ENCODE measurements at regions of chrX and their contacts with region 1.

Region 1: GRCh38 chrX:65595460-65595876 is 60.9 kb upstream of the LAS1L start:
- DNase-seq: peak; percentile 71
- ATAC-seq: peak; percentile 91
- H3K4me3 Mint-ChIP-seq: peak overlapping the region; percentile 76
- H3K27ac Mint-ChIP-seq: peak overlapping the region; percentile 94
- H3K4me1 Mint-ChIP-seq: peaks cover 44% of the 10 kb centered on the region
- H3K27me3 Mint-ChIP-seq: no peaks in the 10 kb centered on the region
- CTCF ChIP-seq: no peak

Region 2: DNA sequence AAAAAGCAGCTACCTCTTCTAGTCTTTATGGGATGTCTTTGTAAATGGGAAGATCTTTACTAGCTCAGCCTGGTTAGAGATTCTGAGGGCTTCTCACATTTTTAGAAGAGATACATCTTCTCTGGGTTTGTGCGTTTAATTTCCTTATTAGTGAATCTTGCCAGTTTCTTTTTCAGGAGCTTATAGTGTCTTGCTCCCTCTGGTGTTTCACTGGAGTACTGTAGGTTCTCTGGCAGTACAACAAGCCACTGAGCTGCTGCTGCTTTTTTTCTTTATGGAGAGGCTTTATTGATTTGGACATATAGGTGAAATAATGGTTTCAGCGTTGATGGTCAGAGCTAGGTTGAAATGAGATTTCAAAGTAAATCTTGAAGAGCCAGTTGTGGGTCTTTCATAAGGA is 143.8 kb before region 1 on chrX:
- CTCF ChIA-PET with region 1: no interaction called
- POLR2A ChIA-PET with region 1: no interaction called
- intact Hi-C with region 1: no loop called
- DNase-seq: no peak
- ATAC-seq: no peak
- H3K4me3 Mint-ChIP-seq: no peak overlapping the region
- H3K27ac Mint-ChIP-seq: no peak overlapping the region
- H3K4me1 Mint-ChIP-seq: peaks cover 3% of the 10 kb centered on the region
- H3K27me3 Mint-ChIP-seq: no peaks in the 10 kb centered on the region
- CTCF ChIP-seq: no peak

Region 3: DNA sequence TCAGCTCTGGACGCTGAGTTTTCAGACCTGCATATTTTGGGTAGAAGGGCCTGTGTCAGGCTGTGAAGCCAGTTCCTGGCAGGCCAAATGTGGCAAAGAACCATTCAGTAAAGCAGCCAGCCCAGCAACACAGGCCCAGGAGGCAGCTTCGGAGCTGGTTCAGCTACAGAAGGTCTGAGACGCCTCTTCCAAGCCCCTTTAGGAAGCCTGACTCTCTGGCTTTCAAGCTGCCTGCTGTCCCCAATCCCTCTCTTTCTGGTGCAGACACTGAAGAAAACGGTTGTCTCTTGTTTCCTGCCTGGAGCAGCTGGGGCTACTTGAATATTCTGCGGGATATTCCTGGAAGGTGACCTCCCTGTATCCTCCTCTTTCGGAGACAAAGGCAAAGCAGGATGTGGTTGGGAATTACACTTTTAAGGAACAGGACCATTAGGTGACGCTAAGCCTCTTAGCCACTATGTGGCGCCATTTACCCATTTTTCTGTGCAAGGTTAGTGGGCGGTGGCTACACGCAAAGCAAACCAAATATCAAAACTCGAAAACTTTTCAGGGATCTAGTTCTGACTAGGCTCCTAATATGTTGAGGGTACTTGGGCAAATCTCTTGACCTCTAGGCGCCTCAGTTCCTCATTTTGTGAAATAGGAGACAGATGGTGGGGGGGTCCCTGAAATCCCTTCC is 13.7 kb before region 1 on chrX:
- CTCF ChIA-PET with region 1: no interaction called
- POLR2A ChIA-PET with region 1: no interaction called
- intact Hi-C with region 1: no loop called
- DNase-seq: no peak
- ATAC-seq: peak; percentile 67
- H3K4me3 Mint-ChIP-seq: no peak overlapping the region
- H3K27ac Mint-ChIP-seq: no peak overlapping the region
- H3K4me1 Mint-ChIP-seq: peaks cover 12% of the 10 kb centered on the region
- H3K27me3 Mint-ChIP-seq: no peaks in the 10 kb centered on the region
- CTCF ChIP-seq: no peak

Region 4: DNA sequence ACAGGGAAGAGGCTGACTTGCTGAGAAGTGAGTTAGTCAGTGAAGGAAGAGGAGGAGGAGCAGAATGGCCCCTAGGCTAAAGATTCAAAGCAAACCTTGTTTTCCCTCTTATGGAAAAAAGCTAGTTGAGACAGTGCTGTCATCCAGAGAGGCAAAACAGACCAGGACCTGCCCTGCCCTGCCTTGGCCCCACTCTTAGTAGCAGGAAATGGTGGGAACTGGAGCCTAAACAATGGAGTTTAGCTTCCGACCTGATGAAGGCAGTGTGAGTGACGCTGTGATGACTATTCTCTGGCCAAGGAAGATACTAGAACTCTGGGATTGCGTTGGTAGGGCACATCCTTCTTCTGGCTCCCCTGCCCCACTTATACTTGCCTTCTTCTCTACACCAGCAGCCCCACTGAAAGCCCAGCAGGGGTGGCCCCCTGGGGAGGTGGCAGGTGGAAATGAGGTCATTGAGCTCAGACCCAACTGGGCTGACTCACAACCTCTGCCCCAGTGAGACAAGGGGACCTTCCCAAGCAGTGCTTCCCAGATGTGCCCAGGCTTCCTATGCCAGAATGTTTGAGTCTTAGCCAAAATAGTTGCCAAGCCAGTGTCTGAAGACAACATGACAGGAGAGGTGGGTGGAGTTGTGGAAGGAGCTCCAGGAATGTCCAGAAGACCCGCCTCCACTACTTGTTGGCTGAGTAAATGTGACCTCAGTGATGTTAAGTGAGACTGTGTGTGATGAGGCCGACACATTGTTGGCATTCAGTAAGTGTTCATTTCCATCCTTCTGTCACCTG is 110.8 kb after region 1 on chrX:
- CTCF ChIA-PET with region 1: no interaction called
- POLR2A ChIA-PET with region 1: interaction called, 3 read pairs
- intact Hi-C with region 1: loop called (anchors 1 kb)
- DNase-seq: peak; percentile 34
- ATAC-seq: peak; percentile 92
- H3K4me3 Mint-ChIP-seq: peak overlapping the region; percentile 50
- H3K27ac Mint-ChIP-seq: peak overlapping the region; percentile 89
- H3K4me1 Mint-ChIP-seq: peaks cover 69% of the 10 kb centered on the region
- H3K27me3 Mint-ChIP-seq: no peaks in the 10 kb centered on the region
- CTCF ChIP-seq: no peak

Region 5: DNA sequence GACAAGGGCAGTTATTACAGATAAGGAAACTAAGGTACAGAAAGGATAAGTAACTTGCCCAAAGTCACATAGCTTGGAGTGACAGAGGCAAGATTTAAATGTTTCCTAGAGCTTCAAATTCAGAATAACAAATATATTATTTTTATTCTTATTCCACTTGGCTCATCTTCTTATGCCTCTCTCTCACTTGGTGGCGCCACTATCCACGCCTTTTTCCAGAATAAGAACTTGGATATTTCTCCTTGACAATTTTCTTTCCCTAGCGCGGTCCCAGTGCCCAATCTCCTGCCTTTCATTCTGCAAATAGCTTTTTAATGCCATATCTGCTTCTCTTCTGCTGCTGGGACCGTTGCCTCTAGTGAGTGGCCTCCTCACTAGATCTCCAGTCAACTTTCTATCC is 150.5 kb after region 1 on chrX:
- CTCF ChIA-PET with region 1: no interaction called
- POLR2A ChIA-PET with region 1: interaction called, 4 read pairs
- intact Hi-C with region 1: loop called (anchors 2 kb)
- DNase-seq: no peak
- ATAC-seq: no peak
- H3K4me3 Mint-ChIP-seq: no peak overlapping the region
- H3K27ac Mint-ChIP-seq: peak overlapping the region; percentile 0
- H3K4me1 Mint-ChIP-seq: peaks cover 40% of the 10 kb centered on the region
- H3K27me3 Mint-ChIP-seq: no peaks in the 10 kb centered on the region
- CTCF ChIP-seq: no peak

Region 6: GRCh38 chrX:65894133-65894532 is 298.7 kb after region 1 on chrX:
- CTCF ChIA-PET with region 1: no interaction called
- POLR2A ChIA-PET with region 1: no interaction called
- intact Hi-C with region 1: loop called (anchors 1 kb)
- DNase-seq: no peak
- ATAC-seq: peak; percentile 76
- H3K4me3 Mint-ChIP-seq: peak overlapping the region; percentile 41
- H3K27ac Mint-ChIP-seq: no peak overlapping the region
- H3K4me1 Mint-ChIP-seq: peaks cover 38% of the 10 kb centered on the region
- H3K27me3 Mint-ChIP-seq: no peaks in the 10 kb centered on the region
- CTCF ChIP-seq: no peak

Region 7: GRCh38 chrX:65985922-65986588 is 390.6 kb after region 1 on chrX:
- CTCF ChIA-PET with region 1: interaction called, 14 read pairs
- POLR2A ChIA-PET with region 1: interaction called, 6 read pairs
- intact Hi-C with region 1: loop called (anchors 1 kb)
- DNase-seq: no peak
- ATAC-seq: peak; percentile 92
- H3K4me3 Mint-ChIP-seq: no peak overlapping the region
- H3K27ac Mint-ChIP-seq: peak overlapping the region; percentile 74
- H3K4me1 Mint-ChIP-seq: peaks cover 43% of the 10 kb centered on the region
- H3K27me3 Mint-ChIP-seq: no peaks in the 10 kb centered on the region
- CTCF ChIP-seq: no peak

Region 8: GRCh38 chrX:66110112-66110511 is 514.6 kb after region 1 on chrX:
- CTCF ChIA-PET with region 1: interaction called, 8 read pairs
- POLR2A ChIA-PET with region 1: no interaction called
- intact Hi-C with region 1: loop called (anchors 1 kb)
- DNase-seq: no peak
- ATAC-seq: peak; percentile 57
- H3K4me3 Mint-ChIP-seq: no peak overlapping the region
- H3K27ac Mint-ChIP-seq: no peak overlapping the region
- H3K4me1 Mint-ChIP-seq: peaks cover 6% of the 10 kb centered on the region
- H3K27me3 Mint-ChIP-seq: no peaks in the 10 kb centered on the region
- CTCF ChIP-seq: no peak